ENCODE measurements at regions of chr5 and their contacts with region 1.

Region 1: GRCh38 chr5:140639148-140639979 is at the start of gene TMCO6:
- DNase-seq: peak; percentile 98 to 99 (median 99)
- ATAC-seq: peak; percentile 95
- H3K4me3 ChIP-seq: peak within 1 kb of the TSS; percentile 54
- H3K27ac ChIP-seq: peak within 1 kb of the TSS; percentile 87
- H3K4me1 ChIP-seq: peaks cover 4 to 20% of the 10 kb centered on the region in 2 experiments; a peak in 4 of 5 replicates
- H3K27me3 ChIP-seq: no peaks in the 10 kb centered on the region; a peak in 1 of 5 replicates
- CTCF ChIP-seq: peak; percentile 64 to 78 (median 77)
- EP300 ChIP-seq: peak; percentile 81
- POLR2A ChIP-seq: peak; percentile 83
- RAD21 ChIP-seq: peak; percentile 50
- polyA plus RNA-seq, gene TMCO6: 3.4 to 5.1 TPM

Region 2: DNA sequence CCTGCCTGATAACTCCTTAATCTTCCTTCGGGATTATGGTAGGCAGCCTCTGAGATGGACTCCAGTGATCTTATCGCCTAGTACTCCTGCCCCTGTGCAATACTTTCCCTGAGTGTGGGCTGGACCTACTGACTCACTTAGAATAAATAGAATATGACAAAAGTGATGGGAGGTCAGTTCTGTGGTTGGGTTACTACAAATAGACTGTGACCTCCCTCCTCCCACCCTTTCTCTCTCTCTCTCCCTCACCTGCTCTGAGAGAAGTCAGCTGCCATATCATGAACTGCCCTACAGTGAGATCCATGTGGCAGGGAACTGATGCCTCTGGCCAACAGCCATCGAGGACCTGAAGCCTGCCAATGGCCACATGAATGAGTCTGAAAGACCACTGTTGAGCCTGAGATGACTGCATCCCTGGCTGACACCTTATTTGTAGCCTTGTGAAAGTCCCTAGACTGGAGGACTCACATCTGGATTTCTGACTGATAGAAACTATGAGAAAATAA is 628.0 kb before region 1 on chr5:
- CTCF ChIA-PET with region 1: no interaction called
- POLR2A ChIA-PET with region 1: no interaction called
- in situ Hi-C with region 1: no loop called
- intact Hi-C with region 1: no loop called
- DNase-seq: peak in 1 of 4 experiments; percentile 14
- ATAC-seq: no peak
- H3K4me3 ChIP-seq: no peak overlapping the region
- H3K27ac ChIP-seq: no peak overlapping the region
- H3K4me1 ChIP-seq: no peaks in the 10 kb centered on the region
- H3K27me3 ChIP-seq: peaks cover 10 to 16% of the 10 kb centered on the region in 2 experiments; a peak in 2 of 5 replicates
- CTCF ChIP-seq: no peak
- EP300 ChIP-seq: no peak
- POLR2A ChIP-seq: no peak
- RAD21 ChIP-seq: no peak

Region 3: GRCh38 chr5:140372971-140373487 is 266.3 kb before region 1 on chr5:
- CTCF ChIA-PET with region 1: no interaction called
- POLR2A ChIA-PET with region 1: no interaction called
- in situ Hi-C with region 1: no loop called
- intact Hi-C with region 1: loop called (anchors 1 kb)
- DNase-seq: peak; percentile 62 to 78 (median 75)
- ATAC-seq: peak; percentile 87
- H3K4me3 ChIP-seq: no peak overlapping the region
- H3K27ac ChIP-seq: no peak overlapping the region
- H3K4me1 ChIP-seq: peaks cover 6 to 7% of the 10 kb centered on the region in 2 experiments; a peak in 2 of 5 replicates
- H3K27me3 ChIP-seq: no peaks in the 10 kb centered on the region
- CTCF ChIP-seq: peak; percentile 68 to 87 (median 80)
- EP300 ChIP-seq: no peak
- POLR2A ChIP-seq: no peak
- RAD21 ChIP-seq: peak; percentile 53 to 79

Region 4: GRCh38 chr5:140557136-140557805 is 82.1 kb before region 1 on chr5 and contains the start of gene SRA1:
- CTCF ChIA-PET with region 1: no interaction called
- POLR2A ChIA-PET with region 1: interaction called, 8 read pairs
- in situ Hi-C with region 1: no loop called
- intact Hi-C with region 1: loop called (anchors 2 kb)
- DNase-seq: peak; percentile 83 to 95 (median 91)
- ATAC-seq: peak; percentile 94
- H3K4me3 ChIP-seq: peak within 1 kb of the TSS; percentile 77
- H3K27ac ChIP-seq: peak within 1 kb of the TSS; percentile 86
- H3K4me1 ChIP-seq: peaks cover 23 to 27% of the 10 kb centered on the region in 2 experiments
- H3K27me3 ChIP-seq: no peaks in the 10 kb centered on the region
- CTCF ChIP-seq: peak in 1 of 3 experiments; percentile 13; a peak in 1 of 6 replicates
- EP300 ChIP-seq: no peak
- POLR2A ChIP-seq: peak; percentile 96
- RAD21 ChIP-seq: no peak
- polyA plus RNA-seq, gene SRA1: 24.1 to 33.6 TPM

Region 5: GRCh38 chr5:140575309-140575708 is 64.1 kb before region 1 on chr5:
- CTCF ChIA-PET with region 1: no interaction called
- POLR2A ChIA-PET with region 1: interaction called, 3 read pairs
- in situ Hi-C with region 1: no loop called
- intact Hi-C with region 1: loop called (anchors 1 kb)
- DNase-seq: peak in 3 of 4 experiments; percentile 42 to 70 (median 61)
- ATAC-seq: peak; percentile 92
- H3K4me3 ChIP-seq: no peak overlapping the region
- H3K27ac ChIP-seq: no peak overlapping the region
- H3K4me1 ChIP-seq: peaks cover 8 to 10% of the 10 kb centered on the region in 2 experiments; a peak in 3 of 5 replicates
- H3K27me3 ChIP-seq: no peaks in the 10 kb centered on the region
- CTCF ChIP-seq: peak; percentile 74 to 95 (median 82)
- EP300 ChIP-seq: no peak
- POLR2A ChIP-seq: no peak
- RAD21 ChIP-seq: peak; percentile 36 to 86; a peak in 3 of 4 replicates

Region 6: DNA sequence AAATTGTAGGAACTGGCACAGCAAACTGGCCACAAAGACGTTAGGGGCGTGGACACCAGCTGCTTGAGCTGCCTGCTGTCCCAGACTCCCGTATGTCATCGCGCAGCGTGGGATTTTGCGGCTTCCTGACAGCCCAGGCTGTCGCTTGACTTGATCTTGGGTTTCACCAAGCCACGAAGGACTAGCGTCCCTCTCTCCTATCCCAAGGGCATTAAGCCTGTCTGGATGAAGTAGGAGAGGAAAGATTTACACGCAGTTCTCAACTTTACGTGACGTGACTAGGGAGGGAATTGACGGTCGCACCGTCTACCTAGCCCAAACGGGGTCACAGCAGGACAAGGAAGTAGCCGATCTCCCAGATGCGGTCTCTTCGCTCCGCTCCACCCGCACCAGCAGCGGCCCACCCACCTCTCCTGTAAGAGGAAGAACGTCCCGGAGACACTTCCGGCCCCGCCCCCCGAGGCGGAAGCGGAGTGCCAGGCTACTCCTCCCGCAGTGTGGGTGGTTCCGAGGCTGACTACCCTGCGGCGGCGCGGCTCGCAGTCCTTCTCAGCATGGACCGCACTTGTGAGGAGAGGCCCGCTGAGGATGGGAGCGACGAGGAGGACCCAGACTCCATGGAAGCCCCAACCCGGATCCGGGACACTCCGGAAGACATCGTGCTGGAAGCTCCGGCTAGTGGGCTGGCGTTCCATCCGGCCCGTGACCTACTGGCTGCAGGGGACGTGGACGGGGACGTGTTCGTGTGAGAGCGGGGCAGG is 25.2 kb after region 1 on chr5 and contains the start of gene WDR55:
- CTCF ChIA-PET with region 1: no interaction called
- POLR2A ChIA-PET with region 1: interaction called, 5 read pairs
- in situ Hi-C with region 1: no loop called
- intact Hi-C with region 1: loop called (anchors 1 kb)
- DNase-seq: peak; percentile 92 to 98 (median 94)
- ATAC-seq: peak; percentile 98
- H3K4me3 ChIP-seq: peak within 1 kb of the TSS; percentile 92
- H3K27ac ChIP-seq: peak within 1 kb of the TSS; percentile 91
- H3K4me1 ChIP-seq: peaks cover 10 to 14% of the 10 kb centered on the region in 2 experiments; a peak in 4 of 5 replicates
- H3K27me3 ChIP-seq: no peaks in the 10 kb centered on the region
- CTCF ChIP-seq: 0 out of 6 replicates have a peak, but pooled peaks of 1 of the 3 experiments have one; percentile 5
- EP300 ChIP-seq: 0 out of 2 replicates have a peak, but pooled peaks have one; percentile 3
- POLR2A ChIP-seq: peak; percentile 92
- RAD21 ChIP-seq: peak; percentile 6 to 9; a peak in 1 of 4 replicates
- polyA plus RNA-seq, gene WDR55: 5.2 to 6.6 TPM

Region 7: GRCh38 chr5:140966293-140967225 is 327.2 kb after region 1 on chr5 and contains the start of gene PCDHAC2:
- CTCF ChIA-PET with region 1: no interaction called
- POLR2A ChIA-PET with region 1: no interaction called
- in situ Hi-C with region 1: no loop called
- intact Hi-C with region 1: no loop called
- DNase-seq: no peak
- ATAC-seq: no peak
- H3K4me3 ChIP-seq: no peak within 1 kb of the TSS
- H3K27ac ChIP-seq: no peak within 1 kb of the TSS
- H3K4me1 ChIP-seq: no peaks in the 10 kb centered on the region; a peak in 1 of 5 replicates
- H3K27me3 ChIP-seq: peaks cover 0 to 11% of the 10 kb centered on the region in 2 experiments; a peak in 2 of 5 replicates
- CTCF ChIP-seq: no peak
- EP300 ChIP-seq: no peak
- POLR2A ChIP-seq: no peak
- RAD21 ChIP-seq: no peak
- polyA plus RNA-seq, gene PCDHAC2: not detected